ENCODE measurements at regions of chr12 and their contacts with region 1.

Region 1: DNA sequence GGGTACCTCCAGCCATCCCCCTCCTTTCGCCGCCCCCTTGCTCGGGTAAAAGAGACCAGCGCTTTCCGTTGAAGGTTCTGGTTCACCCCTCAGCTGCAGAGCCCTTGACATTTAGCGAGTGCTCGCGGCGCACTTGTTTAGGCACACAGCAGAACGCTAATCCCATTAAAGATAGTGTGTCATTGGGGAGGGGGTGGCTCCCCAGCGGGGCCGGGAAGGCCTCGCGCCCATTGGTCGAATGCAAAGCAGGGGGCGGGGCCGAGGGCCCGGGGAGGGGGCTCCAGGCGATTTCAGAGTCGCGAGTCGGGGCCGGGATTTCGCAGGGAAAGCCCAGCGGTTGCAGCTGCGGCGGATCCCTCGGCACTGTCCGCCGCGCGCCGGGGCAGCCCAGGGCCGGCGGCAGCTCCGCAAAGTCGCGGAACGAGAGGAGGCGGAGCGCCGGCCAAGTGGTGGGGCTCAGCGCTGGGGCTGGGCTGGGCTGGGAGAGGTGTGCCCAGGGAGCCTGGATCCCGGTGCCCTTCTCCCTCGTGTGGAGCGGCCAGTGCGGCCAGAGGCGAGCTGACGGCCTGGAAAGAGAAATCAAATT is 122.9 kb downstream of the TSPAN9 start:
- DNase-seq: peak; percentile 52
- H3K4me3 Mint-ChIP-seq: peak overlapping the region; percentile 74
- H3K27ac Mint-ChIP-seq: no peak overlapping the region
- H3K4me1 Mint-ChIP-seq: peaks cover 16% of the 10 kb centered on the region
- H3K27me3 Mint-ChIP-seq: peaks cover 62% of the 10 kb centered on the region
- CTCF ChIP-seq: no peak

Region 2: GRCh38 chr12:3168223-3169221 is 31.6 kb before region 1 on chr12:
- CTCF ChIA-PET with region 1: no interaction called
- intact Hi-C with region 1: loop called (anchors 2 kb)
- DNase-seq: peak; percentile 76
- H3K4me3 Mint-ChIP-seq: no peak overlapping the region
- H3K27ac Mint-ChIP-seq: peak overlapping the region; percentile 19
- H3K4me1 Mint-ChIP-seq: peaks cover 34% of the 10 kb centered on the region
- H3K27me3 Mint-ChIP-seq: peaks cover 55% of the 10 kb centered on the region
- CTCF ChIP-seq: no peak